OCI-LY7 (cell line): ENCODE measurements at regions of chr3 and their contacts with region 1.

Region 1: DNA sequence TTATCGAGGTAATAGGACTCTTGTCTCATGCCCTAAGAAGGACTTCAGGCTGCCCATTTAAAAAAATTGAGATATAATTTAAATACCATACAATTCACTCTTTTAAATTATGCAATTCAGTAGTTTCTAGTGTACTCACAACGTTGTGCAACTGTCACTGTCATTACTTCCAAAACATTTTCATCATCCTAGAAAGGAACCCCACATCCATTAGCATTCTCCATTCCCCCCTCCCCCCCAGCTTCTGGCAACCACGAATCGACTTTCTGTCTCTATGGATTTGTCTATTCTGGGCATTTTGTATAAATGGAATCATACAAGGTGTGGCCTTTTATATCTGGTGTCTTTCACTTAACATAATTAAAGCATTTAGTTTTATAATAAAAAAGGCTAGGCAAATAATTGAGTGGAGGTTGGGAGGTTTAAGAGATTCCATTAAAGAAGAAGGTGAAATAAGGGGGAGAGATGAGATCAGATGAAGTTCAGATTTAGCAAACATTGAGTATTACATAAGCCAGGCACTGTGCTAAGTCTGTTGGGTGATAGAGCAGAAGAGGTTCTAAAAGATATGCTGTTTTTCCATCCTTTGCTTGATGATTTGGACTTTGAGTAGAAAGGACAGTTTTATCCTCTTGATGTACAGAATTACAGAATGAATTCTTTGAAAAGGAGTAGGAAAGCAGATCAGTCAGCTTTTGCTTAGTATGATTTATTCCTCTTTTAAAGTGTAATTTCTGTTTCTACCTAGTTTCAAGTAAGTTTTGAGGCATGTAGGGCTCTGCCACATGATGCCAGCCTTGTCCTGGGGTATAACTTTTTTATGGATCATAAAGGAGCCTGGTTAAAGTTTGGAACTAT is 36.3 kb downstream of the UBE2E2 start:
- DNase-seq: no peak
- H3K4me3 ChIP-seq: no peak overlapping the region
- H3K27ac ChIP-seq: no peak overlapping the region
- H3K4me1 ChIP-seq: no peaks in the 10 kb centered on the region
- CTCF ChIP-seq: no peak

Region 2: DNA sequence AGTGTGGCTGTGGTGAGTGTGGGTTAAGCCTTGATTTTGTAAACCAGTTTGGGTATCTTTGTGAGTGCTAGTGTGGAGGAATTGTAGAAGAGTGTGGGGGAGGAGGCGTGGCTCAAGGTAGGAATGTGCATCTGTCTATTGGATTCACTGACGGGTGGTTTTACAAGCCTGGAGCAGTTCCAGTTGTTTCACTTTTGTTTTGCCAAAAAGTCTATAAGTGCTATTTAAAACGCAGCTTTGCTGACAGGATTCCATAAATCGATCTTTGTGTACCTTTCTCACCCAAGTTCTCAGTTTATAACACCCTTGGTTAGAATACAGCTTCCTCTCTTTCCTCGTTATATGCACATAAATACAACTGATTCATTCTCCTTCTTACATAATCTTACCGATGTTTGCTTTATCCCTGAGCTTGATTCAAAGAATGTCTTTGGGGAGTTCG is 159.5 kb before region 1 on chr3:
- CTCF ChIA-PET with region 1: no interaction called
- POLR2A ChIA-PET with region 1: no interaction called
- intact Hi-C with region 1: no loop called
- DNase-seq: no peak
- H3K4me3 ChIP-seq: no peak overlapping the region
- H3K27ac ChIP-seq: no peak overlapping the region
- H3K4me1 ChIP-seq: no peaks in the 10 kb centered on the region
- CTCF ChIP-seq: no peak

Region 3: DNA sequence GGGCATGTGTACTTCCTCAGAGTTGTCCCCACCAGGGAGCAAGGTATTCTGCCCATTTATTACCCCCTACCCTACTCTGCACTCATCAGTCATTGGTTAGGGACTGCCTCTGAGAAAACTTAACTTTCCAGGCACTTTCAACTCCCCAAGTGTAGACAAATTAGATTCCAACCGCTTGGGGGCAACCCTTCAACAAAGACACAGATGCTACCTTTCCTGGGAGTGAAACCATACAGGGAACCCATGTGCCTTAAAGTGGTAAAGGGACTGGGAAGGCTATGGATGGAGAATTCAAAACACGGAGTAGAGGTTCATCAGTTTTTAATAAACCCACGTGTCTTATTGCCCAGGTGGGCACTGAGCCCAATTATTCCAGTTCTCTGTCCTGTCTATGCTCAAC is 55.7 kb before region 1 on chr3:
- CTCF ChIA-PET with region 1: no interaction called
- POLR2A ChIA-PET with region 1: no interaction called
- intact Hi-C with region 1: no loop called
- DNase-seq: peak; percentile 58
- H3K4me3 ChIP-seq: no peak overlapping the region
- H3K27ac ChIP-seq: no peak overlapping the region
- H3K4me1 ChIP-seq: peaks cover 19% of the 10 kb centered on the region
- CTCF ChIP-seq: peak; percentile 75

Region 4: GRCh38 chr3:23256741-23257435 is 17.4 kb after region 1 on chr3:
- CTCF ChIA-PET with region 1: no interaction called
- POLR2A ChIA-PET with region 1: interaction called, 10 read pairs
- intact Hi-C with region 1: no loop called
- DNase-seq: no peak
- H3K4me3 ChIP-seq: no peak overlapping the region
- H3K27ac ChIP-seq: no peak overlapping the region
- H3K4me1 ChIP-seq: peaks cover 7% of the 10 kb centered on the region
- CTCF ChIP-seq: no peak